Activated CD8-positive, alpha-beta T cell treated with anti-CD3 and anti-CD28 coated beads for 36 hours (primary cell): ENCODE measurements at regions of chr16 and their contacts with region 1.

Region 1: GRCh38 chr16:53518550-53519416 is 15.8 kb upstream of the AKTIP start:
- DNase-seq: peak; percentile 92
- ATAC-seq: peak; percentile 86
- H3K4me3 Mint-ChIP-seq: peak overlapping the region; percentile 70
- H3K27ac Mint-ChIP-seq: peak overlapping the region; percentile 96
- H3K4me1 Mint-ChIP-seq: peaks cover 47% of the 10 kb centered on the region
- H3K27me3 Mint-ChIP-seq: peaks cover 11% of the 10 kb centered on the region
- CTCF ChIP-seq: no peak

Region 2: DNA sequence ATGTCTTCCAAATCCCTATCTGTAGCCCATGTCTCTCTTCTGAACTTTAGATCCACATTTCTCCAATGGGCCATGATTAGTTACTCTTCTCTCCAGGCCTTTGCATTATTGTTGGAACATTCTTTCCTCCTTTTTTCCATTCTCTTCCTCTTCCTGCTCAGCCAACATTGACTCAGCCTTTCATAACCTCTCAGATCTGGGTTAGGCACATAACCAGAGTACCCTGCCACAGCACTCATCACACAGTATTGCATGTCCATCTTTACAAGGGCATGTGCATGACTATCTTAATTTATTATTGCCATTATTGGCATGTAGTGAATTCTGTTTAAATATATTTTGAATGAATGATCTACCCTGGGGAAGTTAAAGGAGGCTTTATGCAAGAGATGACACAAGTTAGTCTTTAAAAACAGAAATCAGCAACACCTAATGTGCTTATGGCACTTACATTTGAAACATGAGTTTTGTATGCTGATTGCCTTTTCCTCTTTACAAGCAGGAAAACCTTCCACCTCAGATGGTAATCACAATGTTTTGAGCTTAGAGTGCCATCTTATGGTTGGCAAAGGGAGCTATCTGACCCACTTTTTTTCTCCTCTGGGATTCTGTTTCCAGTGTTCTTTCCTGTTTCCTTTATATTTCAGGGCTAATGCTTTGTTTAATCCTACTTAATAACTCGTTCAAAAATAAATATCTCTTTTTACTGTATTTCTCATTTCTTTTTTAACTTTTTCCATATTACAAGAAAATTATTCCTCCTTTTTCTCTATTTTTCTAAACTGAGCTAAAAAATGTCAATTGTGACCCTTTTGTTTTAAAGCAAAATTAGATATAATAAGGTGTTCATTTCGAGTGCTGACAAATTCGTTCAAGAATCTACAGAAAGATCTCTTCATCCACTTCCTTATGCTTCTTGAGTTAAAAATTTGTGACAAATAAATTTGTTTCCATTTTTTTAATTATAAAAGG is 235.5 kb before region 1 on chr16:
- CTCF ChIA-PET with region 1: no interaction called
- POLR2A ChIA-PET with region 1: no interaction called
- intact Hi-C with region 1: no loop called
- DNase-seq: no peak
- ATAC-seq: no peak
- H3K4me3 Mint-ChIP-seq: no peak overlapping the region
- H3K27ac Mint-ChIP-seq: no peak overlapping the region
- H3K4me1 Mint-ChIP-seq: no peaks in the 10 kb centered on the region
- H3K27me3 Mint-ChIP-seq: no peaks in the 10 kb centered on the region
- CTCF ChIP-seq: peak; percentile 57

Region 3: DNA sequence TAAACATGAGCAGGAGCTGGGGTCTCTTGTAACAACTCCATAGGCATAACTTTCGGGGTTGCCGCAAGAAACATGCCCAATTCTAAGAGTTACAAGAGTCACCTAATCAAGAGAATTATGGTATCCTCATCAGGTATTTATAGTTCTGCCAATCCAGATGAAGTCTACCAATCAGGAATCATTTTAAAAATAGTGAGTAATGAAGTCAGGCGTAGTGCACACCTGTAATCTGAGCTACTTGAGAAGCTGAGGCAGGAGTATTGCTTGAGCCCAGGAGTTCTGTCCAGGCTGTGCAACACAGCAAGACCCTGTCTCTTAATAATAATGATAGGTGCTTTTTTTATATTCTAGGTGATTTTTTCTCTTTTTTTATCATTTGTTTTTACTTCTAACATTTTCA is 213.0 kb before region 1 on chr16:
- CTCF ChIA-PET with region 1: no interaction called
- POLR2A ChIA-PET with region 1: no interaction called
- intact Hi-C with region 1: no loop called
- DNase-seq: no peak
- ATAC-seq: no peak
- H3K4me3 Mint-ChIP-seq: no peak overlapping the region
- H3K27ac Mint-ChIP-seq: no peak overlapping the region
- H3K4me1 Mint-ChIP-seq: no peaks in the 10 kb centered on the region
- H3K27me3 Mint-ChIP-seq: no peaks in the 10 kb centered on the region
- CTCF ChIP-seq: no peak

Region 4: DNA sequence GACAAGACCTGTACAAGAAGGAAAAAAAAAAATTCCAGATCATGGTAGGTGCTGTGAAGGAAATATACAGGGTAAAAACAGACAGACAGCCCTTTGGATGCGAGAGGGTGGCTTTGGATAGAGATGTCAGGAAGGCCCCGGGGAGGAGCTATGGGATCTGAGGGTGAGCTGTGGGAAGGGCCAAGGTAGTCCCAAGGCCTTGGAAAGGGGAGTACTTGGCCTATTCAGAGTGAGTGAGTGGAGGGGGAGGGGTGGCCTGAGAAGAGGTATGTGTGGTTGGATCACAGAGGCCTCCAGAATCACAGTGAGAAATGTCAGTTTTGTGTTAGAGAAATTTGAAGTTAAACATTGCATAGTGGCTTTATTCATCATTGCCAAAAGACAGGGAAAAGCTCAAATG is 15.4 kb after region 1 on chr16:
- CTCF ChIA-PET with region 1: interaction called, 3 read pairs
- POLR2A ChIA-PET with region 1: interaction called, 6 read pairs
- intact Hi-C with region 1: loop called (anchors 2 kb)
- DNase-seq: no peak
- ATAC-seq: no peak
- H3K4me3 Mint-ChIP-seq: no peak overlapping the region
- H3K27ac Mint-ChIP-seq: peak overlapping the region; percentile 52
- H3K4me1 Mint-ChIP-seq: peaks cover 24% of the 10 kb centered on the region
- H3K27me3 Mint-ChIP-seq: no peaks in the 10 kb centered on the region
- CTCF ChIP-seq: no peak

Region 5: DNA sequence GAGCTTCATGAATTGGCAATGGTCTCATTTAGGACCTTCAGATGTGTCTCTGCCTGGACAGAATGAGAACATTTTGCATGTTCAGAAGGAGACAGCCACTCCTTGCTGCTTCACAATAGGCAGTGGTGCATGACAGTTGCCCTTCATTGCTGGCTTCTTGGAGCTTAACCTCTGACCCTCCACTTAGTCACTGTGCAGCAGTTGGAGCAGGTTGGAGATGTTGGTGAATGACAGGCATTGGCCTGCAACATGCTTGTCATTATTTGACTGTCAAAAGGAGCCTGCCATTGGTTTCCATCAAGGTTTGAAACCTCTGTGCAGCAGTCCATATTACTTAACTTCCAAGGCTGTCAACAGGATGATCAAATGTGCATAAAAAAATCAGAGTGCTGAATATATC is 207.8 kb after region 1 on chr16:
- CTCF ChIA-PET with region 1: no interaction called
- POLR2A ChIA-PET with region 1: no interaction called
- intact Hi-C with region 1: no loop called
- DNase-seq: no peak
- ATAC-seq: no peak
- H3K4me3 Mint-ChIP-seq: no peak overlapping the region
- H3K27ac Mint-ChIP-seq: no peak overlapping the region
- H3K4me1 Mint-ChIP-seq: peaks cover 36% of the 10 kb centered on the region
- H3K27me3 Mint-ChIP-seq: no peaks in the 10 kb centered on the region
- CTCF ChIP-seq: no peak